ENCODE measurements at regions of chr1 and their contacts with region 1.

Region 1: DNA sequence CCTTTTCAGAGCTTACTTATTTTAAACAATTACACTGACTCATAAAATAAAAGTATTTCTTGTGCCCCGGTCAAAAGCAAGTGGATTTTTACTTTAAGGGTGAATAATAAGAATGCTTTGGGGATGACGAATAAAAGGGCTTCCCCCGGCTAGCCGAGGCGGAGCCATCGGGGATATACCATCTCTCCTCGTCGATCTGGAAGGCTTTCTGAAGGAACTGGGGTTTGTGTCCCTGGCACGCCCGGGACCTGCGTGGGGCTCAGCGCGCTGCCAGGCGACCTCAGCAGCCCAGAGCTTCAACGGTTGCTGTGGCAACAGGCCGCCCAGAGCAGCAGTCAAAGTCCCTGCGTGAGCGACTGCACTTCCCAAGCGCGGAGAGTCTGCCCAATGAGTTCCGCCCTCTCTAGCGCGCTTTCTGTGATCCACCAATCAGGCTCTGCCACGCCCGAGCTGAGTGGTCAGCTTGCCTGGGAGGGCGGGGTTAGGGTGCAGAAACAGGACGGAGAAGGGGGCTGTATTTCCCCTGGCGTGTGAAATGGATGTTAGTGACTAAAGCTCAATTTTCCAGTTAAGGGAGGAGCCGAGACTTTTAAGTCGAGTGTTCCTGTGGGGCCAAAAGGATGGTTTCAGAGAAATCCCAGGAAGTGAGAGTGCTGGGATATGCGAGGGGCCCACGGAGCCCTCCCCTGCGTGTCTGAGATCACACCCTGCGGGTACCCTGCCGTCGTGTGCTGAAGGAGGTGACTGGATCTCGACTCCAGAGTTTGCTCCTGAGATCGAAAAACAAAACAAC is 33.0 kb upstream of the MGST3 start:
- DNase-seq: peak; percentile 98
- ATAC-seq: peak; percentile 95
- H3K4me3 Mint-ChIP-seq: peak overlapping the region; percentile 84
- H3K27ac Mint-ChIP-seq: peak overlapping the region; percentile 92
- H3K4me1 Mint-ChIP-seq: peaks cover 33% of the 10 kb centered on the region
- H3K27me3 Mint-ChIP-seq: peaks cover 27% of the 10 kb centered on the region

Region 2: DNA sequence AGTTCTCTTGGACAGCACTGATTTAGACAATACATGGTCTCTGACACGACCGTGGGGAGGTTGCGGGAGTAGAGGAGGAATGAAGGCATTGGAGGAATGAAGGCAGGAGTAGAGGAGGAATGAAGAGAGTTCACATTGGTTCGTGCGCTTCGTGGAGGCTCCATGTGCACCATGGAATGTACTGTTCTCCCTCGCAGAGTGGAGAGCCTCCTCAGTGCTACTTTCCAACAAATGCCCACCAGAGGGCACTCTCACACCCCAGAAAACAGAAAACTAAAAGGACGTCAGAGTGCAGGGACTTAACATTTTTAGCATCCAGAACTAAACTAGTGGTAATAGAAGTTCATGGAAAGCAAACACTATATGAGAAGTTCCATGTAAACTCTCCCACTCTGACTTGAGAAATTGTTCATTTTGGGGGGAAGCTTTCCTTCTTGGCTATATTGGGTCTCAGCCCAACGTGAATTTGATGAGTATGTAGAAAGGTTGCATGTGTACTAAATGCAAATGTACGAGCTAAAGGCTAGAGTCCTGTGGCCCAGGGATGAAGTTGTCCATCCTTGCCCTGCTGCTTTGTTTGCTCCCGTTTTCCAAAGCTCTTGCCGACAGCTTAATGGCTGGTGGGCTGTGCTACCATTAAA is 453.2 kb before region 1 on chr1:
- CTCF ChIA-PET with region 1: interaction called, 3 read pairs
- POLR2A ChIA-PET with region 1: no interaction called
- intact Hi-C with region 1: loop called in 1 of 2 experiments (anchors 10 kb)
- DNase-seq: peak; percentile 57
- ATAC-seq: peak; percentile 30
- H3K4me3 Mint-ChIP-seq: no peak overlapping the region
- H3K27ac Mint-ChIP-seq: no peak overlapping the region
- H3K4me1 Mint-ChIP-seq: no peaks in the 10 kb centered on the region
- H3K27me3 Mint-ChIP-seq: peaks cover 15% of the 10 kb centered on the region

Region 3: GRCh38 chr1:165392634-165393571 is 205.2 kb before region 1 on chr1:
- CTCF ChIA-PET with region 1: interaction called, 150 read pairs
- POLR2A ChIA-PET with region 1: no interaction called
- intact Hi-C with region 1: loop called (anchors 1 kb)
- DNase-seq: peak; percentile 93
- ATAC-seq: peak; percentile 95
- H3K4me3 Mint-ChIP-seq: peak overlapping the region; percentile 62
- H3K27ac Mint-ChIP-seq: peak overlapping the region; percentile 43
- H3K4me1 Mint-ChIP-seq: peaks cover 15% of the 10 kb centered on the region
- H3K27me3 Mint-ChIP-seq: peaks cover 67% of the 10 kb centered on the region

Region 4: DNA sequence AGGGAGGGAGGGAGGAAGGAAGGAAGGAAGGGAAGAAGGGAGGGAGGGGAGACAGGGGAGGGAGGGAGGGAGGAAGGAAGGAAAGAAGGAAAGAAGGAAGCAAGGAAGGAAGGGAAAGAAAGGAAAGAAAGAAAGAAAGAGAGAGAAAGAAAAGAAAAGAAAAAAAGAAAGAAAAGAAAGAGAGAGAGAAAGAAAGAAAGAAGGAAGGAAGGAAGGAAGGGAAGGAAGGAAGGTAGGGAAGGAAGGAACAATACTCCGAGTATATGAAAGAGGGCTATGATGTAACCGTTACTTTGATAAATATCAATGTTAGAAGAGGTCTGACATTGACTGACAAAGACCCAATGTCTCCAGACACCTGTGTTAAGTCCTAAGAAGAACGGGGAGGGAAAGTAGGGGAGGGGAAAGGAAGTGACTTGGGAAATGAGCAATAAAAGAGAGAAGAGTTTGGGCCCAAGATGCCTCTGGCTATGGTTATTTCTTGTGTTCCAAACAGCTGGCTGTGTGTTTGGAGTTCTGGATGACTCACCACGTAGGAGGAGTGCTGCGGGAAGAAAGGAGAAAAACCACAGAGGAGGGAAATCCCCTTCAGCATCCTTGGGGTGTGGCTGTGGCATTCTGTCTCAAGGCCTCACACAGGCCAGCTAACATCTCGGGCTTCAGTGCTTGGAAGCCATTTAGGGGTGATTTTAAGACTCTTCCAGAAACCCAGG is 116.1 kb before region 1 on chr1:
- CTCF ChIA-PET with region 1: no interaction called
- POLR2A ChIA-PET with region 1: no interaction called
- intact Hi-C with region 1: loop called in 1 of 2 experiments (anchors 5 kb)
- DNase-seq: peak; percentile 42
- ATAC-seq: peak; percentile 78
- H3K4me3 Mint-ChIP-seq: no peak overlapping the region
- H3K27ac Mint-ChIP-seq: no peak overlapping the region
- H3K4me1 Mint-ChIP-seq: peaks cover 16% of the 10 kb centered on the region
- H3K27me3 Mint-ChIP-seq: peaks cover 21% of the 10 kb centered on the region

Region 5: GRCh38 chr1:165543532-165544495 is 54.3 kb before region 1 on chr1 and contains the start of gene LRRC52:
- CTCF ChIA-PET with region 1: no interaction called
- POLR2A ChIA-PET with region 1: no interaction called
- intact Hi-C with region 1: no loop called
- DNase-seq: peak; percentile 7
- ATAC-seq: peak; percentile 9
- H3K4me3 Mint-ChIP-seq: no peak within 1 kb of the TSS
- H3K27ac Mint-ChIP-seq: no peak within 1 kb of the TSS
- H3K4me1 Mint-ChIP-seq: no peaks in the 10 kb centered on the region
- H3K27me3 Mint-ChIP-seq: peaks cover 33% of the 10 kb centered on the region
- total RNA-seq, gene LRRC52: not detected

Region 6: GRCh38 chr1:165697881-165698760 is 100.0 kb after region 1 on chr1 and contains the start of gene ALDH9A1:
- CTCF ChIA-PET with region 1: interaction called, 12 read pairs
- POLR2A ChIA-PET with region 1: interaction called, 6 read pairs
- intact Hi-C with region 1: loop called (anchors 1 kb)
- DNase-seq: peak; percentile 90
- ATAC-seq: peak; percentile 91
- H3K4me3 Mint-ChIP-seq: peak within 1 kb of the TSS; percentile 99
- H3K27ac Mint-ChIP-seq: peak within 1 kb of the TSS; percentile 99
- H3K4me1 Mint-ChIP-seq: peaks cover 33% of the 10 kb centered on the region
- H3K27me3 Mint-ChIP-seq: no peaks in the 10 kb centered on the region
- total RNA-seq, gene ALDH9A1: 29.0 to 37.6 TPM

Region 7: GRCh38 chr1:165871311-165872067 is 273.4 kb after region 1 on chr1:
- CTCF ChIA-PET with region 1: no interaction called
- POLR2A ChIA-PET with region 1: no interaction called
- intact Hi-C with region 1: loop called in 1 of 2 experiments (anchors 2 kb)
- DNase-seq: peak; percentile 71
- ATAC-seq: peak; percentile 86
- H3K4me3 Mint-ChIP-seq: no peak overlapping the region
- H3K27ac Mint-ChIP-seq: peak overlapping the region; percentile 61
- H3K4me1 Mint-ChIP-seq: peaks cover 49% of the 10 kb centered on the region
- H3K27me3 Mint-ChIP-seq: no peaks in the 10 kb centered on the region